ENCODE measurements at regions of chr13 and their contacts with region 1.

Region 1: GRCh38 chr13:96511587-96511986 is 421.7 kb downstream of the HS6ST3 start:
- DNase-seq: no peak
- ATAC-seq: no peak
- H3K4me3 ChIP-seq: no peak overlapping the region
- H3K27ac ChIP-seq: no peak overlapping the region
- H3K4me1 ChIP-seq: no peaks in the 10 kb centered on the region
- H3K27me3 ChIP-seq: no peaks in the 10 kb centered on the region
- CTCF ChIP-seq: no peak
- EP300 ChIP-seq: no peak
- POLR2A ChIP-seq: no peak
- RAD21 ChIP-seq: no peak

Region 2: DNA sequence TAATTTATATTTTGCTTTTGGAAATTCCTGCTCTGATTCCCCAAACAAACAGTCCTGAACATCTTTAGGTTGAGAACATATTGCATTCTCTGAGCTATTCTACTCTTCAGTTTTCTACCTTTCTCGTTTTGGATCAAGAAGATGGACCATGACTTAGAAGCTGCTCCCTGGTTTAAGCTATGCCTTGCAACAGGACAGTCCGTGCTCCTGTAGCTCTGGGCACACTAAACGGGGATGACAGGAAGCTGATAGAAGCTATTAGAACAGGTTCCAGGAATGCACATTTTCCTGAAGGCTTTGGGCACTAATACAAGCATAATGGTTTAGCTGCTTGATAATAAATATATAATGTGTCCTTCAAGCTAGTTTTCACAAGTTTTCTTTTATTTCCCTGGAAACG is 36.5 kb before region 1 on chr13:
- CTCF ChIA-PET with region 1: no interaction called
- POLR2A ChIA-PET with region 1: no interaction called
- in situ Hi-C with region 1: no loop called
- intact Hi-C with region 1: loop called (anchors 5 kb)
- DNase-seq: no peak
- ATAC-seq: no peak
- H3K4me3 ChIP-seq: no peak overlapping the region
- H3K27ac ChIP-seq: no peak overlapping the region
- H3K4me1 ChIP-seq: no peaks in the 10 kb centered on the region
- H3K27me3 ChIP-seq: 0 out of 5 replicates have a peak, but pooled peaks cover 0 to 2% of the 10 kb centered on the region in 2 experiments
- CTCF ChIP-seq: no peak
- EP300 ChIP-seq: no peak
- POLR2A ChIP-seq: no peak
- RAD21 ChIP-seq: no peak

Measured in HepG2 (cell line).